Activated CD4-positive, alpha-beta T cell treated with anti-CD3 and anti-CD28 coated beads for 36 hours (primary cell): ENCODE measurements at regions of chr7 and their contacts with region 1.

Region 1: GRCh38 chr7:38369816-38370493 is 96.5 kb upstream of the TARP start:
- DNase-seq: peak; percentile 92
- ATAC-seq: peak; percentile 67
- H3K4me3 Mint-ChIP-seq: no peak overlapping the region
- H3K27ac Mint-ChIP-seq: peak overlapping the region; percentile 73
- H3K4me1 Mint-ChIP-seq: peaks cover 52% of the 10 kb centered on the region
- H3K27me3 Mint-ChIP-seq: no peaks in the 10 kb centered on the region

Region 2: GRCh38 chr7:37901236-37901827 is 468.6 kb before region 1 on chr7:
- CTCF ChIA-PET with region 1: interaction called, 4 read pairs
- POLR2A ChIA-PET with region 1: no interaction called
- intact Hi-C with region 1: loop called in 1 of 2 experiments (anchors 5 kb)
- DNase-seq: no peak
- ATAC-seq: peak; percentile 44
- H3K4me3 Mint-ChIP-seq: no peak overlapping the region
- H3K27ac Mint-ChIP-seq: no peak overlapping the region
- H3K4me1 Mint-ChIP-seq: no peaks in the 10 kb centered on the region
- H3K27me3 Mint-ChIP-seq: peaks cover 2% of the 10 kb centered on the region

Region 3: DNA sequence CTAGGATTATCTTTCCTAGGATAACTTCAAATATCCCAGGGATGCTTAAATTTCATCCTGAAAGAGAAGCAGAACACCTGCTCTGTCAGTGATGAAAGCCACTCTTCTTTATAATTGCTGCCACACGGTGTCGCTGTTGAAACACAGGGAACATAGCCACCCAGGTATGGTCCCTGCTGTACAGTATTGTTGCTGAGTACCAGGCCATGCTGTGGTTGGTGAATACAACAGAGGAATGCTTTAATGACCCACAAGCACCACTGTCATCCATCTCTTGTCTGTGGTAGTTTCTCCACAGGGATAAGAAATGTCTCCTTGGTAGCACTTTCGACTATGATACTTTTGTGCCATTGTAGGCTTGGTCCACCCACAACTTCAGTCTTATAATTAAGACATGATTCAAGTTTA is 262.5 kb before region 1 on chr7:
- CTCF ChIA-PET with region 1: interaction called, 62 read pairs
- POLR2A ChIA-PET with region 1: no interaction called
- intact Hi-C with region 1: loop called (anchors 1 kb)
- DNase-seq: peak; percentile 80
- ATAC-seq: peak; percentile 85
- H3K4me3 Mint-ChIP-seq: no peak overlapping the region
- H3K27ac Mint-ChIP-seq: no peak overlapping the region
- H3K4me1 Mint-ChIP-seq: no peaks in the 10 kb centered on the region
- H3K27me3 Mint-ChIP-seq: peaks cover 16% of the 10 kb centered on the region

Region 4: DNA sequence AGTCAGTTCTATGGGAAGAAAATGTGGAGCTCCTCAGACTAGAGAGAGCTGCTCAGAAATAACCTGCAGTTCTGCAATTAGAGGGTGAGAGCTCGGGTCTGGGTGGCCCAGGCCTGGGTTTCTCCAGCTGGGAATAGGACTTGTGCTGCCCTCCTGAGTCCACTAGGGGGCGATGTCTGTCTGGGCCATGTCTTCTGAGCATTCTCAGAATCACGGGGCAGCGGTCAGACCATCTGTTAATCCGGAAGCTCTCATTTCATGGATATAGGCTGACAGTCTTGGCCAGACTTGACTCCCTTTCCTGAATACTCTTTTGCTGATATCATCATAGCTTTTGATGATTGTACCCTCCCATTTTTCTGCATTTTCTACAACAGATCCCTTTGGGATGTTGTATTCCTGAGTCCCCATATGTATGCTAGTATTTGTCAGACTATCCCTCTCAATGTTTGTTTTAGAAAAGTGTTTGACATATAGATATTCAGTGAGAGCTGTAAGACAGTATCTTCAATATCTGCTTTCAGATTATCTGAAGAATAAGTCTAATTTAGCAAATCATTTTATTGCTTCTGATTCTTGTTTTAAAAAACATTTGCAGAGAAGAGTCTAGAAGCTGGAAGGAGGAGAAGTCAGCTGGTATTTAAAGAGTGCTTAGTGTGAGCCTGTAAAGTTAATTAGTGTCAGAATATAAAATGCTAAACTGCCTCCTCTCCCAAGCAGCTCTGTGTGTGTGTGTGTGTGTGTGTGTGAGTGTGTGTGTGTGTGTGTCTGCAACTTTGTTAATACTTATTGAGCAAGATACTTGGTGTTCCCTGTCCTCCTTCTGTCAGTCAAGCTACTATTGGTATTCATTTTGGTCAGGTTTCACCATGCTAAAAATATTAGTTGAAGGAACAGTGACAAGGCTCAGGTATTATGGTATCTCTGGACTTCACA is 154.0 kb before region 1 on chr7:
- CTCF ChIA-PET with region 1: interaction called, 203 read pairs
- POLR2A ChIA-PET with region 1: no interaction called
- intact Hi-C with region 1: loop called (anchors 1 to 2 kb)
- DNase-seq: peak; percentile 86
- ATAC-seq: peak; percentile 87
- H3K4me3 Mint-ChIP-seq: no peak overlapping the region
- H3K27ac Mint-ChIP-seq: peak overlapping the region; percentile 7
- H3K4me1 Mint-ChIP-seq: peaks cover 31% of the 10 kb centered on the region
- H3K27me3 Mint-ChIP-seq: no peaks in the 10 kb centered on the region

Region 5: DNA sequence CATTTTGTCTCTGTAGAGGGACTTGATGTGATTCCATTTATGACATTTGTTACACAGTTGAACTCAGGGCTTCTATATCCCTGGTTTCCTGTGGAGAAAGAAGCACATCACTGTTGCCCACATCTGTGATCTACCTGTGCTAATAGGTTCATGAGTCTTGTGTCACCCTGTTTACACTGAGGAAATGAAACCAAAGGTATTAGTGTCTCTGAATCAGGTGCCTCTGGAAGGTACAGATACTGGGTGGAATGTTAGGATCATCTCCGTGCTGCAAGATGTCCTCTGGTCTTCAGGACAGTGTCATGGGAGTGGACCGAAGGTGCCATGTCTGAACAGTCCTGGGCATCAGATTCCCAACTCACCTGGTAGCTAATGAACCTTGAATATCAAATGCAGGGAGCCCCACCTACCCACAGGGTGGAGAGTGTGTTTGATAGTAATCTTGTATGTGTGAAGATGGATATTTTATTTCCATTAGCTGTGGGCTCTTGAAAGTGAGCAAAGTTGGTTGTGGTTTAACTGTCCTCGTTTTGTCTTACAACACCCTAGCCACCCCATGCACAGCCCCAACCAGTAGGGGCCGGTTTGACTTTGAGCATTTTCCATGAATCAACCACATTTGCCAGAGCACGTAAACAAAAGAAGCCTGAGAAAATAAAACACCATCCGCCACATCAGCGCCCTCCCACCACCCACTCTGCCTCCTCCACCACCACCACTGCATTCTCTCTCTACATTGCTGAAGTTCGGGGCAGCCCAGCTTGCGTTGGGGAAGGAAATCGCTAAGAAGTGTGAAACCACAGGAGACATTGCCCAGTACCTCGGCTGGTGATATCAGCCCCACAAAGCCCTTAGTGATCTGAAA is 137.2 kb before region 1 on chr7:
- CTCF ChIA-PET with region 1: interaction called, 7 read pairs
- POLR2A ChIA-PET with region 1: no interaction called
- intact Hi-C with region 1: loop called in 1 of 2 experiments (anchors 5 kb)
- DNase-seq: peak; percentile 84
- ATAC-seq: peak; percentile 88
- H3K4me3 Mint-ChIP-seq: peak overlapping the region; percentile 50
- H3K27ac Mint-ChIP-seq: peak overlapping the region; percentile 71
- H3K4me1 Mint-ChIP-seq: peaks cover 39% of the 10 kb centered on the region
- H3K27me3 Mint-ChIP-seq: no peaks in the 10 kb centered on the region

Region 6: GRCh38 chr7:38385682-38386428 is 15.9 kb after region 1 on chr7:
- CTCF ChIA-PET with region 1: interaction called, 38 read pairs
- POLR2A ChIA-PET with region 1: no interaction called
- intact Hi-C with region 1: no loop called
- DNase-seq: no peak
- ATAC-seq: no peak
- H3K4me3 Mint-ChIP-seq: no peak overlapping the region
- H3K27ac Mint-ChIP-seq: no peak overlapping the region
- H3K4me1 Mint-ChIP-seq: no peaks in the 10 kb centered on the region
- H3K27me3 Mint-ChIP-seq: no peaks in the 10 kb centered on the region